PC-9 (cell line): ENCODE measurements at regions of chr7 and their contacts with region 1.

Region 1: DNA sequence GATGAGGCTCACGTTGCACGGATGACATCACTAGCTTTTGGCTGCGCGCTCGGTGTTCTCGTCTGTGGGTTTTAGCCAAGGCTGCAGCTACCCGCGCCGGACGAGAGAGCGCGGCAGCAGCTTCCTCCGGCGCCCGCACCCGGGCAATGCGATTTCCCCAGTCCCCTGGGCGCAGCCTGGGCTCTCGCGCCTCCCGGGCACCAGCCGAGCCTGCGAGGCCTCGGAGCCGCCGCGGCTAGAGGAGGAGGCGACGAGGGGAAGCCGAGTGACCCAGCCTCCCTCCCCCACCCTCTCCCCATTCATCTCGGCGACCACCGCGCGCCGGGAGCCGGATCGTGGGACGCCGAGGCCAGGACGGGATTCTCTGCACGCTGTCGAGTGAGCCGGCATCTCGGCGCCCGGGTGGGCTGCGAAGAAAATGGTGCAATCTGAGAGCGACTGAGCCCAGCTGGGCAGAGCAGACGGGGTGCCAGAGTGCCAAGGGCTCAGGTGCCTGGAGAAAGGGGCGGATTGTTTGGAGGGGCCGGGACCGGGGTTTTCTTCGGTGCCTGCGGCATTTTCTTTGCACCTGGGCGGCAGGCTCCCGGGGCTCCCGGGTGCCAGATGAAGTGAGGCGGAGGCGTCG is 1.2 kb upstream of the TMEM178B start:
- DNase-seq: no peak
- H3K4me3 ChIP-seq: no peak overlapping the region
- H3K27ac ChIP-seq: no peak overlapping the region
- H3K4me1 ChIP-seq: no peaks in the 10 kb centered on the region
- H3K27me3 ChIP-seq: peaks cover 52% of the 10 kb centered on the region
- CTCF ChIP-seq: no peak

Region 2: GRCh38 chr7:140898786-140899536 is 173.7 kb before region 1 on chr7:
- CTCF ChIA-PET with region 1: no interaction called
- POLR2A ChIA-PET with region 1: interaction called, 14 read pairs
- intact Hi-C with region 1: no loop called
- DNase-seq: peak in 1 of 2 experiments; percentile 50
- H3K4me3 ChIP-seq: no peak overlapping the region
- H3K27ac ChIP-seq: no peak overlapping the region
- H3K4me1 ChIP-seq: no peaks in the 10 kb centered on the region; the same call in 1 of the 2 replicates
- H3K27me3 ChIP-seq: no peaks in the 10 kb centered on the region
- CTCF ChIP-seq: no peak

Region 3: DNA sequence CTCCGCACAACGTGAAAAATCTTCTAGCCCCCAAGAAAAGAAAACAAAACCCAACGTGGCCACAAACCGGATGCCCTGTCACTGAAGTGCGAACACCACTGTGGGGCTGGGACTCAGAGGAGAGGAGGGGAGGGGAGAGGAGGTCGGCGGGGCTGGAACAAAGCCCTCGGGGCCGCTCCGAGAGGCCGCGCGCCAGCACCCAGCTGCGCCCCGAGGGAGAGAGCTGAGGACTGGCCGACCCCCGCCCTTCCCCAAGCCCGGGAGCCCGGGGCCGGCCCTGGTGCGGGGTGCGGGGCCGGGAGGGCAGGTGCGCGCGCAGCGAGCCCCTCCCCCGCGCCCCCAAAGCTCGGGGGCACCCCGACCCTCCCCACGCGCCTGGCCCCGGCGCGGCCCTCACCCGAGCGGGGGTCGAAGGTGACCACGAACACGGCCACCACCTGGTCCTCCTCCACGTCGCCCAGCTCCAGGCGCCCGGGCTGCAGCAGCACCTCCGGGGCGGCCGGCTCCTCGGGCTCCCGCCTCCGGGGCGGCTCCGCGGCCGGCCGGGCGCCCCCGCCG is 628.9 kb after region 1 on chr7:
- CTCF ChIA-PET with region 1: no interaction called
- POLR2A ChIA-PET with region 1: no interaction called
- intact Hi-C with region 1: no loop called
- DNase-seq: peak in 1 of 2 experiments; percentile 45
- H3K4me3 ChIP-seq: peak overlapping the region; percentile 84
- H3K27ac ChIP-seq: no peak overlapping the region
- H3K4me1 ChIP-seq: peaks cover 18% of the 10 kb centered on the region
- H3K27me3 ChIP-seq: no peaks in the 10 kb centered on the region
- CTCF ChIP-seq: no peak